GM10248 (cell line): ENCODE measurements at regions of chr14 and their contacts with region 1.

Region 1: DNA sequence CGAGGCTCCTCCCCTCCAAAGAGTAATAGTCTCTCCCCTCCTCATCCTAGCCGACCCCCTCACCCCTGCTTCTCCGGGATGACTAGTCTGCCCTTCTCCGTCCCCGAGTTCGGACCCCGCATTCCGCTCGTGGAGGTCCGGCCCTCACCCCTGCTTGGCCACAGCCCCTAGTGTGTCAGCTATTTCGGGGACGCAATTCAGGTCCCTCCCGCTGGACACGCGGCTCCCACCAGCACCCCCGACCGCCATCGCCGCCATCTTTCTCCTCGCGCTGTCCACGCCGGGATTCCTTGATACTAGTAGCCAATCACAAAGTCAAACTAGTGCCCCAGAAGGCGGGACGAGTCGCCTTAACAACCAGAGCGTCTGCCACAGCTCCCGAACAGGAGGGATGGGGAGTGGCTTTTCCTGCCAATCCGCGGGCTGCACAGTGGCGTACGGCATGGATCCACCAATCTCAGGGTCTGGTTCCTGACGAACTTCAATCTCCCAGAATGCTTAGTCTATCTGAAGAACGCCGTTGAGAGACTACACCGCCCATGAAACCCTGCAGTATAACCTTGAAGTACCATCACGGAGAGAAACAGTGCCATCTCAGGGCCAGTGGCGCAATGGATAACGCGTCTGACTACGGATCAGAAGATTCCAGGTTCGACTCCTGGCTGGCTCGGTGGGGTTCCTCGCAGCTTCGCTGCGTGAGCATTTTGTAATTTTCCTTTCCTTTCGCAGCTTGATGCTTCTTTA is at the start of gene PRMT5:
- DNase-seq: peak; percentile 94
- CTCF ChIP-seq: no peak

Region 2: GRCh38 chr14:22630486-22630885 is 298.8 kb before region 1 on chr14:
- CTCF ChIA-PET with region 1: no interaction called
- POLR2A ChIA-PET with region 1: no interaction called
- DNase-seq: no peak
- CTCF ChIP-seq: no peak

Region 3: GRCh38 chr14:22872033-22872832 is 57.0 kb before region 1 on chr14:
- CTCF ChIA-PET with region 1: interaction called, 11 read pairs
- POLR2A ChIA-PET with region 1: no interaction called
- DNase-seq: peak; percentile 80
- CTCF ChIP-seq: peak; percentile 94

Region 4: GRCh38 chr14:22900081-22900799 is 29.0 kb before region 1 on chr14:
- CTCF ChIA-PET with region 1: interaction called, 12 read pairs
- POLR2A ChIA-PET with region 1: no interaction called
- DNase-seq: peak; percentile 70
- CTCF ChIP-seq: peak; percentile 59

Region 5: GRCh38 chr14:22939684-22940083 is 10.4 kb after region 1 on chr14:
- CTCF ChIA-PET with region 1: interaction called, 44 read pairs
- POLR2A ChIA-PET with region 1: no interaction called
- DNase-seq: no peak
- CTCF ChIP-seq: no peak

Region 6: DNA sequence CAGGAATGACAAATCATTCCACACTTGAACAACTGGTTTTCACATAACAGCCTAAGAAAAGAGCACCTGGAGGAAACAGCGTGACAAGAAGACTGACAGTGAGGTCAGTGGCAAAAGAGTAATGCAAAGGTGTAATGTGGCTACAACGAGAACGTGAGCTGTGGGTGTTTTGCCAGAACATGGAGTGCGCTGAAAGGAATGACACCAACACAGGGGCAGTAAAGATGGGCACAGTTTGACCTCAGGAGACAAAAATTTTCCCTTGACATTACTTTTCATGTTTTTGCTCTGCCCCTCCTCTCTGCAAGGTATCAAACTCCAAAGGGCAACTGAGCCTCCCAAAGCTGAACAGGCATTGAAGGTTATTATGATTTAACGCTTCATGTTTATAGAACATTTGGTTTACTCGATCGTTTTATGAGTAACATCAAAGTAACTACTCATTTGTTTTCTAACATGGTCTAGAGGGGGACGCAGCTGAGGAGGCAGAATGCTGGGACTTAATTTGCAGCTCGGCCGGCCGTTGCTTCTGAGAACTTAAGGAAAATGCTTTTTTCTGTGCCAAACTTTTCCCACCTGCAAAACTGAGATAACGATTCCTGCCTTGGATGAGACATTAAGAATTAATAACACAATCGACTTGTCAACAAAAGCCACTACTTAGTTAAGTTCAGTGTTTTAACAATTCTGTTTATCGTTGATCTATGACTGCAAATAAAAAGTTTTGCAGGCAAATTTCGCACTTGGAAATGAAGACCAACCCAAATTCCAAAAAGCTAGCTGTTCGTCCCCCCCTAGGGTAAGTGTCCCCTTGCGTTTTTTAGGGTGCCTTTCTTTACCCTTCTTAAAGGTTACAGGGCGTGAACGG is 26.7 kb after region 1 on chr14:
- CTCF ChIA-PET with region 1: interaction called, 41 read pairs
- POLR2A ChIA-PET with region 1: interaction called, 3 read pairs
- DNase-seq: no peak
- CTCF ChIP-seq: no peak

Region 7: DNA sequence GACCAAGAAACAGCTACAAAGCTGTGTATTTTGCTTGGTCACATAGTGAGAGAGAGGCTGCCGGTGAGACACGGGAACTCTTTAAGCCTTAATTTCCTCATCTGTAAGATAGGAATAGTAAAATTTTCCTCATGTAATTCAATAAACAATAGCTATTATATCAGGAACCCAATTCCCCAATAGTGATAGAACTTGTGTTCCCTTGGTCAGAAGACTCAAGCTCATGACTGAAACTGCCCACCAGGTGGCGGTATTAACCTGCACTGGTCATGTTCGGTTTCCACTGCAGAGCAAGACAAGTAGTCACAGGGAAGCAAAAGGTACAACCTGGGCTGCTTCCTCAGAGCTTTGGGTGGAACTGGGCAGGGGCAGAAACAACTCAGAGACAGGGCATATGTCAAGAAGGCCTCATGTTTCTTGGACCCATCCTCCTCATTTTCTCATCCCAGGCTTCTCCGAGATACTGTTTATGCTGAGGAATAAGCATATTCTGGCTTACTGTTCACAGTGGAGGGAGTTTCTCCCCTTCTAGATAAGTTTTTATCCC is 57.3 kb after region 1 on chr14:
- CTCF ChIA-PET with region 1: interaction called, 61 read pairs
- POLR2A ChIA-PET with region 1: interaction called, 3 read pairs
- DNase-seq: peak; percentile 85
- CTCF ChIP-seq: peak; percentile 93

Region 8: DNA sequence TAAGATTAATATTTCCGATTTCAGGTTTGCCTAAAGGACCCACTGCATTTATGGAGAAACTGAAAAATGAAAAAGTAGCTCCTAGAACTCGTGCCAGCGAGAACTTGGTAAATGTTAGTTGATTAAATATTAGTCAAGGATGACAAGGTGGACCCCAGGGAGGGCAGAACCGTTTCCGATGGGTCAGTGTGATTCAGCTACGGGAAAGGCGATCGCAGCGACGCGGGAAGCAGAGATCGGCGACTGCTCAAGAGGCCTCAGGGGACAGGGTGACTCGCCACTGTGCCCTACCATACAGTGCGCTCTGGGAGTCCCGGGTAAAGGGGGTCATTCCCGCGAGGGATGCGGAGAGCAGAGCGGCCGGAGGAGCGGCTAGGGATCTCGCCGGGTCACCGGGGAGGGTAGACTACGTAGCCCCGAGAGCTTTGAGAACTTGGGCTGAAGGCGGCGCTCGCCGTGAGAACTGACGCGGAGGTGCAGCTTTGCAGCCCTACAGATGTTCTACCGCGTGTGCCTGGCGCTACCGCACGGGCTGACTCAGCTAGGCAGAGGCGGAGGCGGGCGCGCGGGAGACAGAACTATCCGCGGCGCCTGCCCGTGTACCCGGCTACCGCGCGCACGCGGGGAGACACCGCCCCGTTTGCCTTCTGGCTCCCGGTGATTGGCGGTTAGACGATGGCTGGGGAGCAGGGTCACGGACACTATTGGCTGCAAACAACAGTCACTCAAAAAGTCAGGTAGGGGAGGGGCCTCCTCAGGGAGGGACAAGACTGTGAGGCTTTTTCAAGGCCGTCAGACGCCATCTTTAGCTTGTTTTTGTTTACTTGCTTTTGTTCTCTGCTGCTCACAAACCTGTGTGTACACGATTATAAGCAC is 77.5 kb after region 1 on chr14:
- CTCF ChIA-PET with region 1: interaction called, 12 read pairs
- POLR2A ChIA-PET with region 1: interaction called, 3 read pairs
- DNase-seq: peak; percentile 97
- CTCF ChIP-seq: no peak

Region 9: GRCh38 chr14:23237772-23238594 is 308.7 kb after region 1 on chr14 and contains the start of gene RNF212B:
- CTCF ChIA-PET with region 1: no interaction called
- POLR2A ChIA-PET with region 1: no interaction called
- DNase-seq: peak; percentile 87
- CTCF ChIP-seq: no peak